ENCODE measurements at regions of chr11 and their contacts with region 1.

Region 1: GRCh38 chr11:76248210-76248609 is 41.9 kb upstream of the WNT11 start:
- DNase-seq: peak; percentile 49 to 61 (median 60)
- ATAC-seq: peak; percentile 79
- H3K4me3 ChIP-seq: no peak overlapping the region
- H3K27ac ChIP-seq: no peak overlapping the region
- H3K4me1 ChIP-seq: peaks cover 0 to 5% of the 10 kb centered on the region in 2 experiments; a peak in 1 of 5 replicates
- H3K27me3 ChIP-seq: peaks cover 2 to 26% of the 10 kb centered on the region in 2 experiments; a peak in 4 of 5 replicates
- CTCF ChIP-seq: peak; percentile 49 to 68 (median 49)
- EP300 ChIP-seq: no peak
- POLR2A ChIP-seq: no peak
- RAD21 ChIP-seq: peak in 1 of 2 experiments; percentile 31; a peak in 2 of 4 replicates

Region 2: GRCh38 chr11:76236092-76237003 is 11.9 kb before region 1 on chr11:
- CTCF ChIA-PET with region 1: no interaction called
- POLR2A ChIA-PET with region 1: interaction called, 11 read pairs
- in situ Hi-C with region 1: no loop called
- intact Hi-C with region 1: no loop called
- DNase-seq: peak; percentile 61 to 79 (median 73)
- ATAC-seq: peak; percentile 71
- H3K4me3 ChIP-seq: peak overlapping the region; percentile 77
- H3K27ac ChIP-seq: peak overlapping the region; percentile 56
- H3K4me1 ChIP-seq: peaks cover 16 to 36% of the 10 kb centered on the region in 2 experiments
- H3K27me3 ChIP-seq: no peaks in the 10 kb centered on the region
- CTCF ChIP-seq: no peak
- EP300 ChIP-seq: no peak
- POLR2A ChIP-seq: peak; percentile 57; the same call in 1 of the 2 replicates
- RAD21 ChIP-seq: no peak

Measured in K562 (cell line).